SK-N-SH (cell line): ENCODE measurements at regions of chr10 and their contacts with region 1.

Region 1: GRCh38 chr10:103712570-103713498 is 142.5 kb downstream of the SH3PXD2A start:
- DNase-seq: peak; percentile 73
- H3K4me3 ChIP-seq: no peak overlapping the region
- H3K27ac ChIP-seq: no peak overlapping the region
- H3K4me1 ChIP-seq: peaks cover 30 to 59% of the 10 kb centered on the region in 2 experiments; a peak in 2 of 4 replicates
- H3K27me3 ChIP-seq: no peaks in the 10 kb centered on the region
- CTCF ChIP-seq: peak; percentile 88
- EP300 ChIP-seq: no peak
- RAD21 ChIP-seq: peak; percentile 98

Region 2: DNA sequence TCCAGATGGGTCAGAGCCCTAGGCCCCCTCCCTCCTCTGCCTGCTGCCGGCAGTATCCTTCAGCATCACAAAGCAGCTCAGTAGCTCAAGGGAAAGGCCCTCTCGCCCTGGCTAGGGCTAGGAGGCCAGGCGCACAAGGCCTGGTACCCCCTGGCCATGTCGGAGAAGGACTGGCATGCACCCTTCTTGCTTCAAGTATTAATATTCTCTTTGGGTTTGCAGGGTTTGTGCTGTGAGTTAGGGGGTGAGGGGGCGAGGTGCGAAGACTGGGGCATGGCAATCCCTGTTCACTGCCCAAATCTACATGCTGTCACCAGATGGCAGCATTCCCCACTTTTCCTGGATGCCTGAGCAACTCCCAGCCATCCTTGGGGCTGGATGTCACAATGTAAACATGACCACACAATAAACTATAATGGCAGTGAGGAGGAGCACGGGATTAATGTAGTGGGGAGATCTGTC is 114.1 kb before region 1 on chr10:
- CTCF ChIA-PET with region 1: interaction called, 30 read pairs
- POLR2A ChIA-PET with region 1: no interaction called
- DNase-seq: peak; percentile 88
- H3K4me3 ChIP-seq: no peak overlapping the region
- H3K27ac ChIP-seq: peak overlapping the region in 1 of 2 experiments; percentile 25; a peak in 1 of 4 replicates
- H3K4me1 ChIP-seq: peaks cover 0 to 10% of the 10 kb centered on the region in 2 experiments; a peak in 2 of 4 replicates
- H3K27me3 ChIP-seq: no peaks in the 10 kb centered on the region
- CTCF ChIP-seq: peak; percentile 80
- EP300 ChIP-seq: no peak
- RAD21 ChIP-seq: peak; percentile 93

Region 3: GRCh38 chr10:103696411-103697145 is 16.3 kb before region 1 on chr10:
- CTCF ChIA-PET with region 1: interaction called, 10 read pairs
- POLR2A ChIA-PET with region 1: no interaction called
- DNase-seq: peak; percentile 46
- H3K4me3 ChIP-seq: no peak overlapping the region
- H3K27ac ChIP-seq: peak overlapping the region in 1 of 2 experiments; percentile 73; a peak in 2 of 4 replicates
- H3K4me1 ChIP-seq: peaks cover 9 to 14% of the 10 kb centered on the region in 2 experiments; a peak in 3 of 4 replicates
- H3K27me3 ChIP-seq: no peaks in the 10 kb centered on the region
- CTCF ChIP-seq: peak; percentile 58
- EP300 ChIP-seq: peak in 1 of 2 experiments; percentile 43; a peak in 1 of 4 replicates
- RAD21 ChIP-seq: no peak

Region 4: GRCh38 chr10:103752680-103753248 is 39.9 kb after region 1 on chr10:
- CTCF ChIA-PET with region 1: interaction called, 16 read pairs
- POLR2A ChIA-PET with region 1: no interaction called
- DNase-seq: no peak
- H3K4me3 ChIP-seq: peak overlapping the region in 1 of 2 experiments; percentile 41; a peak in 1 of 4 replicates
- H3K27ac ChIP-seq: no peak overlapping the region
- H3K4me1 ChIP-seq: peaks cover 3 to 6% of the 10 kb centered on the region in 2 experiments; a peak in 2 of 4 replicates
- H3K27me3 ChIP-seq: no peaks in the 10 kb centered on the region
- CTCF ChIP-seq: peak; percentile 83
- EP300 ChIP-seq: no peak
- RAD21 ChIP-seq: no peak

Region 5: GRCh38 chr10:103847909-103848468 is 135.2 kb after region 1 on chr10:
- CTCF ChIA-PET with region 1: interaction called, 169 read pairs
- POLR2A ChIA-PET with region 1: no interaction called
- DNase-seq: peak; percentile 56
- H3K4me3 ChIP-seq: no peak overlapping the region
- H3K27ac ChIP-seq: no peak overlapping the region
- H3K4me1 ChIP-seq: peaks cover 40 to 52% of the 10 kb centered on the region in 2 experiments
- H3K27me3 ChIP-seq: no peaks in the 10 kb centered on the region
- CTCF ChIP-seq: peak; percentile 42
- EP300 ChIP-seq: no peak
- RAD21 ChIP-seq: no peak

Region 6: GRCh38 chr10:103874730-103875129 is 161.9 kb after region 1 on chr10:
- CTCF ChIA-PET with region 1: interaction called, 31 read pairs
- POLR2A ChIA-PET with region 1: no interaction called
- DNase-seq: peak; percentile 77
- H3K4me3 ChIP-seq: no peak overlapping the region
- H3K27ac ChIP-seq: peak overlapping the region in 1 of 2 experiments; percentile 88; a peak in 2 of 4 replicates
- H3K4me1 ChIP-seq: peaks cover 0 to 19% of the 10 kb centered on the region in 2 experiments; a peak in 2 of 4 replicates
- H3K27me3 ChIP-seq: no peaks in the 10 kb centered on the region
- CTCF ChIP-seq: no peak
- EP300 ChIP-seq: peak in 1 of 2 experiments; percentile 65; a peak in 1 of 4 replicates
- RAD21 ChIP-seq: peak; percentile 36

Region 7: GRCh38 chr10:103888113-103888841 is 175.4 kb after region 1 on chr10:
- CTCF ChIA-PET with region 1: interaction called, 134 read pairs
- POLR2A ChIA-PET with region 1: no interaction called
- DNase-seq: peak; percentile 51
- H3K4me3 ChIP-seq: peak overlapping the region in 1 of 2 experiments; percentile 0; a peak in 1 of 4 replicates
- H3K27ac ChIP-seq: peak overlapping the region; percentile 43 to 70
- H3K4me1 ChIP-seq: peaks cover 8 to 18% of the 10 kb centered on the region in 2 experiments; a peak in 2 of 4 replicates
- H3K27me3 ChIP-seq: no peaks in the 10 kb centered on the region
- CTCF ChIP-seq: peak; percentile 94
- EP300 ChIP-seq: no peak
- RAD21 ChIP-seq: peak; percentile 95